Common myeloid progenitor, CD34-positive (primary cell): ENCODE measurements at regions of chr3 and their contacts with region 1.

Region 1: DNA sequence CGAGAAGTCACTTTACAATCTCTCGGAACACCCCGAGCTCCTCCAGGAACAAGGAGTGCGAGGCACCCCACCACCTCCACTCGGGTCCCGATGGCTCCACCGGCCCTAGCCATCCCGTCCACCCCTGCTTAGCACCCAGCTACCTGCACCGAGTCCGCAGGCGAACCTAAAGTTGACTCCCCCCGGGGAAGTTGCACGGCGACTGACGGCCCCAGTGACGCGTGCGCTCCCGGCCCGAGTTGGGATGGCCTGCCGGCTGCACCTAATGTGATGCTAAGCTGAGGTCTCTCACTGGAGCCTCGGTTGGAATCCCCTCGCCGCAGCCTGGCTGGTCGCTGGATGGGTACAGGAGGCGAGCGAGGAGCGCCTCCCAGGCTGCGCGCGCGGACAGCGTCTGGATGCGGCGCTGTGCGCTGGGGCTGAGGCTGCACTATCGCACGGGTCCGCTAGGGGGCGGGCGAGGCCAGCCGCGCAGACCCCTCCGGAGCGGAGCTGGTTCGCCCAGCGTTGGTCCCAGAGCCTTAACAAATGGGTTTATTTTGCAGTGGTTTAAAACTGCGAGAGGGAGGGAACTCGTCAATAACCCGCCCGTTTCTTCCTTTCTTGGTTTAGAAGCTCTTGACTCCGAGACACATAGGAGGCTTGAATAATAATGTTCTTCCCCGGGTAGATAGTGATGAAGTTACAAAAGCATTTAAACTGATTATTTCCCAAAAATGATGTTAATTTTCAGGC is at the start of gene OXTR:
- DNase-seq: peak; percentile 59 to 72 (median 69)
- H3K4me3 ChIP-seq: peak within 1 kb of the TSS in 6 of 7 experiments; percentile 20 to 72 (median 58)
- H3K27ac ChIP-seq: no peak within 1 kb of the TSS
- H3K4me1 ChIP-seq: peaks cover 0 to 22% (median 21%) of the 10 kb centered on the region in 4 experiments
- H3K27me3 ChIP-seq: peaks cover 16 to 71% (median 36%) of the 10 kb centered on the region in 5 experiments

Region 2: DNA sequence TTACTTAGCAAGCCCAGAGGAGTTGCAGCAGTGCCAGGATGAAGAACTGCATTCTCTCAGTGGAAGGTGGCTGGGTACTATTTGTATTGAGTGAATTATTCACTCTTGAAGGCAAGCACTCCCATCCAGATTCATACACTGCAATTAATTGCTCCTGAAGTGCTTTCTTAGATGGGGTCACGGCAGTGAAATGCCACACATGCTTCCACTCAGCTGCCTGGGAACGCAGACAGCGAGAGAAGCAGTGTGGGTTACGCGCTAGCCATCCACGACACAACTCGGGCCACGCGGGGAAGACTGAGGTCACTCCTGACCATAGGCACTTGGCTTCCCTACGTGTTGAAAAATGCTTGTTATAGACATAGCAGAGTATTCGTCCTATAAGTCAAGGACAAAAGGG is 298.5 kb before region 1 on chr3:
- CTCF ChIA-PET with region 1: no interaction called
- POLR2A ChIA-PET with region 1: no interaction called
- DNase-seq: no peak
- H3K4me3 ChIP-seq: no peak overlapping the region
- H3K27ac ChIP-seq: no peak overlapping the region
- H3K4me1 ChIP-seq: no peaks in the 10 kb centered on the region
- H3K27me3 ChIP-seq: no peaks in the 10 kb centered on the region

Region 3: DNA sequence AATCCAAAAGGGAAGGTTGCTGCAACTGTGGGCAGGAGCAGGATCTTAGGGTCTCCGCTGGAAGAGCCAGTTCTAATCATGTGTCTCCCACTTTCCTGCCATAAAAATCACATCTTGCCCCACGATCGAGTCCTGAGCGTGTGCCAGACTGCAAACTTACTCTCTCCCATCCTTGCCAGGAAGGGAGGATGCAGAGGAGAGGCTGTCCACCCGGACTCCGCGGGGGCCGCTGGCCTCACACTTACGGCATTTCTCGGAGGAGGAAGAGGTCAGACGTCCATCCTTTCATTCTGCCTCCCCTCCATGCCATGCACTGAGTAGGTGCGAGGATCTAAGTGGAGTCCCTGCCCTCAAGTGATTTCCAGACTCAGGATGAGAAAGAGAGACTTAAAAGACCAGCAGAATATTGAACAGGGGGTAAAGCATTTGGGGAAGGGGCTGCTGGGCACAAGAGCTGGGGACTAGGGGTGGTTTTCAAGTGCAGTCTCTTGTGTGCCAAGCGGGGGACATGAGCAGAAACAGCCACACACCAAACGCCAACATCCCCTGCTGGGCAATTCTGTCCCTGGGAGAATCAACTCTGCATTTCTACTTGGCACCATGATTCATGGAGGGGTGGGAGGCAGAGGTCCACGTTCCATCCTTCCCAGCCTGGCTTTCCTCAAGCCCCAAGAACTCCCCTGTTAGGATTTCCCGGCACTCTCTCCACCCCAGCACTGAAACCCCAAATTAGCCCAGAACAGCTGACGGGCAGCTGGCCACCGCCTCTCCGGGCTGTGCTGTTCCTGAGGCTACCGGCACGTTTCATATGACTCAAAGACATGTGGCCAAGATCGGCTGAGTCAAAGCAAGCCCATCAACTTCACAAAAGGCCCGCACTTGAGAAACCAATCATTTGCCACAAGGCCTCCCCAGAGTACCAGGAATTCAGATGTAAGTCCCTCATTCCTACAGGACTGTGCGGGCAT is 11.4 kb before region 1 on chr3:
- CTCF ChIA-PET with region 1: interaction called, 13 read pairs
- POLR2A ChIA-PET with region 1: no interaction called
- DNase-seq: no peak
- H3K4me3 ChIP-seq: no peak overlapping the region
- H3K27ac ChIP-seq: no peak overlapping the region
- H3K4me1 ChIP-seq: no peaks in the 10 kb centered on the region
- H3K27me3 ChIP-seq: peaks cover 0 to 2% (median 0%) of the 10 kb centered on the region in 5 experiments

Region 4: GRCh38 chr3:8784676-8785435 is 15.6 kb after region 1 on chr3:
- CTCF ChIA-PET with region 1: interaction called, 10 read pairs
- POLR2A ChIA-PET with region 1: interaction called, 3 read pairs
- DNase-seq: no peak
- H3K4me3 ChIP-seq: no peak overlapping the region
- H3K27ac ChIP-seq: no peak overlapping the region
- H3K4me1 ChIP-seq: no peaks in the 10 kb centered on the region
- H3K27me3 ChIP-seq: no peaks in the 10 kb centered on the region

Region 5: GRCh38 chr3:8837162-8837561 is 67.9 kb after region 1 on chr3:
- CTCF ChIA-PET with region 1: no interaction called
- POLR2A ChIA-PET with region 1: no interaction called
- DNase-seq: no peak
- H3K4me3 ChIP-seq: no peak overlapping the region
- H3K27ac ChIP-seq: no peak overlapping the region
- H3K4me1 ChIP-seq: no peaks in the 10 kb centered on the region
- H3K27me3 ChIP-seq: no peaks in the 10 kb centered on the region

Region 6: GRCh38 chr3:9130345-9131305 is 361.4 kb after region 1 on chr3:
- CTCF ChIA-PET with region 1: no interaction called
- POLR2A ChIA-PET with region 1: no interaction called
- DNase-seq: no peak
- H3K4me3 ChIP-seq: no peak overlapping the region
- H3K27ac ChIP-seq: no peak overlapping the region
- H3K4me1 ChIP-seq: peaks cover 0 to 12% (median 4%) of the 10 kb centered on the region in 4 experiments
- H3K27me3 ChIP-seq: no peaks in the 10 kb centered on the region

Region 7: DNA sequence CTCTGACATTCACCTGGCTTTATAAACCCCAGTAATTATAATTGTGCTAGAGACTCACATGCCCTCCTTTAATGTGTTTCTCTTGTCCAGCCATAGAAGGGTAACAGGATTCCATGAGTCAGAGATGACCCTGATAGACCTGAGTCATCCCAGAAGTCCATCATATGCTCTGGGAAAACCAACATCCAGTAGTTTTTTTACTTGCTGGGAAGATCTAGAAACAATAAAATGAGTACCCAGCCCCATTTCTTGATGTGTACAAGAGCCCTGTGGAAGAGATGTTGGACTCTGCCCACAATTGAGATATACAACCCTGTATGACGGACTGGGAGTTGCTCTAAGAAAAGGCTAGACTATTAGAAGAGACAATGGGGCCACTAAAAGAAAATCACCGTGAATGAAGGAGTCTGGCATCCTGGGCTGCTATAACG is 571.2 kb after region 1 on chr3:
- CTCF ChIA-PET with region 1: no interaction called
- POLR2A ChIA-PET with region 1: no interaction called
- DNase-seq: no peak
- H3K4me3 ChIP-seq: no peak overlapping the region
- H3K27ac ChIP-seq: no peak overlapping the region
- H3K4me1 ChIP-seq: no peaks in the 10 kb centered on the region
- H3K27me3 ChIP-seq: peaks cover 0 to 3% (median 0%) of the 10 kb centered on the region in 5 experiments